BJ (cell line): ENCODE measurements at regions of chr9 and their contacts with region 1.

Region 1: DNA sequence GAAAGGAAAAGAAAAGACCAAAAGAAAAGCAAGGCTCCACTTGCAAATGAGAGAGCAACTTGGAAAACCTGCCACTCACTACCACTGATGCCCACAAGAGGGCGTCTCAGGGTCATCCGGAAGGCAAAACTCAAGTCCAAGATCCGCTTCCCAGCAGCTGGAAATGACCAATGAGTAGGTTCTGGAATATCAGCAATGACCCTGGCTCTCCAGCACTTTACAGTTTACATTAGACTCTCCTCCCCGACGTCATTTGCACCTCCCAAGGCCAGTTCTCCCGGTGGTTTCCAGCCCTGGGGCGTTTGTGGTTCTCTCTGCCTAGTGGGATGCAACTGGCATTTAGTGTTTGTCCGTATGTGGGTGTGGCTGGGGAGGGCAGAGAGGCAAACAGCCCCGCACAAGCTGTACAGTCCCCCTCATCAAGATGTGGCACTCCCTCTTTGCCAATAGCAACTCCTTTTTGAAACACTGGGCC is 193.8 kb upstream of the ZNF618 start:
- DNase-seq: peak; percentile 47
- H3K4me3 ChIP-seq: no peak overlapping the region
- H3K27me3 ChIP-seq: peaks cover 4% of the 10 kb centered on the region
- CTCF ChIP-seq: peak; percentile 95

Region 2: GRCh38 chr9:113669522-113670115 is 12.7 kb before region 1 on chr9:
- CTCF ChIA-PET with region 1: interaction called, 18 read pairs
- POLR2A ChIA-PET with region 1: no interaction called
- DNase-seq: peak; percentile 51
- H3K4me3 ChIP-seq: no peak overlapping the region
- H3K27me3 ChIP-seq: no peaks in the 10 kb centered on the region
- CTCF ChIP-seq: no peak

Region 3: DNA sequence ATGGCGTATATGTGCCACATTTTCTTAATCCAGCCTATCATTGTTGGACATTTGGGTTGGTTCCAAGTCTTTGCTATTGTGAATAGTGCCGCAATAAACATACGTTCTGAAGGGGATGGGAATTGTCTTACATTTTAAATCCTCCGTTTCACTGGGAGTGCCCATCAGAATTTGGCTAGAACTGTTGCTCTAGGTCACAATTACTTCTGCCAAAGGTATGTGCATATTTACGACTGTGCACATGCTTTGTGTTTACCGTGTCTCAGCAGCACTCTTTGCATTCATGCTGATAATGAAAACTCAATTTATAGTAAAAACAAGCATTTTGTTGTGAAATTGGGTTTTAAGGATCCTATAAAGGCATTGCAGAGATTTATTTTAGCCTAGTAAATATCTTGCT is 41.9 kb after region 1 on chr9:
- CTCF ChIA-PET with region 1: no interaction called
- POLR2A ChIA-PET with region 1: no interaction called
- DNase-seq: no peak
- H3K4me3 ChIP-seq: no peak overlapping the region
- H3K27me3 ChIP-seq: peaks cover 7% of the 10 kb centered on the region; the same call in 1 of the 2 replicates
- CTCF ChIP-seq: no peak